ENCODE measurements at regions of chr4 and their contacts with region 1.

Region 1: DNA sequence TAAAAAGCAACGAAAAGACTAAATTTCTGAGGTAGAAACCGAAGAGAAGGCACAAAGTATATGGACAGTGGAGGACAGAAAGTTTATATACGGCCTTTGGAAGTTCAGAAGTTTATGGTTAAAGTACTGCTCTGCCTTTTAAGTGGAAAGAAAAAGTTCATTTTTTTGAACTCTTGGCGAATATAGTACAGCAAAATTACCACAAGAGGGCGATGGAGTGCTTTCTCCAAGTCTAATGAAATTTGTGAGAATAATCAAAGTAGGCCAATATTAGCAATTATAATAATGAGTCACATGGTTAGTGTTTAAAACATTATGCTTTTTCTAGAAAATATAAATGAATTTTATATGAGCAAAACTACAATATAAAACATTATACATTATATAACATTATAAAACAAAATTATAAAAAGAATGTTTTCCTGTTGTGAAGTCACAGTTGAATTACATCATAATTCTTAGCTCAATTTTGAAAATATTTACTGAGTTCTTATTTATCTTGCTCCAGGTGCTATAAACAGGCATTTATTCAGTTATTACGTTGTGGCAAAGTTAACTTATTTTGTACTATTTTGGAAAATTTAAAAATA is 136.2 kb upstream of the BMPR1B start:
- DNase-seq: peak; percentile 27
- H3K4me3 Mint-ChIP-seq: no peak overlapping the region
- H3K27ac Mint-ChIP-seq: no peak overlapping the region
- H3K4me1 Mint-ChIP-seq: peaks cover 8% of the 10 kb centered on the region
- H3K27me3 Mint-ChIP-seq: no peaks in the 10 kb centered on the region
- CTCF ChIP-seq: peak; percentile 35

Region 2: DNA sequence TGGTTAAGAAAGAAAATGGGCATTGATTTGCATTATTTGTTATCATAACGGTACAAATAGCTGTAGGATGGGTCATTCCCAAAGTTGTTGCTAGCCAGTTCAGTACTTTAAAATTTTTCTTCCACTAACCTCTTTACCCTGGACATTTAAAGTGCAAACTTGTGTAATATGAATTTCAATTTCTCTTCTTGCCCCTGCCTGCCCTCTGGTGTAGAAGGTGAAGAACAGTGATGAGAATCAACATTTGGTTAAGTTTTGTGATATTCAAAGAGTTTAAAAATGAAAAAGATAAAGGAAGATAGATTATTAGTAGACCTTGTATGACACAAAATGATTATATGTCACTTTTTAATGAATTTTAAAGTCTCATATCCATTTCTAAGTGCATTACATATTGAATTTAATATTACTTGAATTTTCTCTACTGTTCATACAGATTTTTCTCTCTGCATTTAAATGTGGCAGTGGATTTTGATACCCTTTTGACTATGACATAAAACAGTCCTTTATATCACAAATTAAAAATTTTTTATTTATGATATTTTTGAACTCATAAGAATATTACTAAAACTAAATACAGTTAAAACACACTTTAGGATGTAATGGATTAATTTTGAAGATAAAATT is 473.9 kb after region 1 on chr4:
- CTCF ChIA-PET with region 1: no interaction called
- intact Hi-C with region 1: loop called (anchors 5 kb)
- DNase-seq: peak; percentile 44
- H3K4me3 Mint-ChIP-seq: no peak overlapping the region
- H3K27ac Mint-ChIP-seq: no peak overlapping the region
- H3K4me1 Mint-ChIP-seq: peaks cover 20% of the 10 kb centered on the region
- H3K27me3 Mint-ChIP-seq: no peaks in the 10 kb centered on the region
- CTCF ChIP-seq: peak; percentile 50

Measured in Calu3 (cell line).